ENCODE measurements at regions of chr16 and their contacts with region 1.

Region 1: GRCh38 chr16:22291860-22292692 is 5.1 kb upstream of the POLR3E start:
- DNase-seq: no peak

Region 2: GRCh38 chr16:22206013-22206841 is 85.8 kb before region 1 on chr16 and contains the start of gene EEF2K:
- intact Hi-C with region 1: loop called in 1 of 2 experiments (anchors 5 kb)
- DNase-seq: peak; percentile 97
- total RNA-seq, gene EEF2K: 33.6 to 45.7 TPM